Mammary epithelial cell (primary cell): ENCODE measurements at regions of chr7 and their contacts with region 1.

Region 1: GRCh38 chr7:148940702-148941597 is 56.9 kb upstream of the EZH2 start:
- DNase-seq: peak; percentile 77
- H3K4me3 ChIP-seq: peak overlapping the region; percentile 67 to 74 (median 73)
- H3K27ac ChIP-seq: peak overlapping the region; percentile 97
- H3K4me1 ChIP-seq: no peaks in the 10 kb centered on the region
- H3K27me3 ChIP-seq: no peaks in the 10 kb centered on the region
- CTCF ChIP-seq: no peak

Region 2: GRCh38 chr7:148611692-148612091 is 329.3 kb before region 1 on chr7:
- CTCF ChIA-PET with region 1: no interaction called
- dilution Hi-C with region 1: no loop called
- in situ Hi-C with region 1: no loop called
- intact Hi-C with region 1: no loop called
- DNase-seq: no peak
- H3K4me3 ChIP-seq: no peak overlapping the region
- H3K27ac ChIP-seq: no peak overlapping the region
- H3K4me1 ChIP-seq: no peaks in the 10 kb centered on the region
- H3K27me3 ChIP-seq: peaks cover 10% of the 10 kb centered on the region
- CTCF ChIP-seq: peak in 1 of 2 donors; percentile 24

Region 3: GRCh38 chr7:148698397-148699023 is 242.4 kb before region 1 on chr7 and contains the start of gene CUL1:
- CTCF ChIA-PET with region 1: no interaction called
- dilution Hi-C with region 1: no loop called
- in situ Hi-C with region 1: no loop called
- intact Hi-C with region 1: loop called (anchors 5 kb)
- DNase-seq: peak; percentile 79
- H3K4me3 ChIP-seq: peak within 1 kb of the TSS; percentile 49 to 85 (median 79)
- H3K27ac ChIP-seq: peak within 1 kb of the TSS; percentile 89
- H3K4me1 ChIP-seq: peaks cover 48% of the 10 kb centered on the region
- H3K27me3 ChIP-seq: no peaks in the 10 kb centered on the region
- CTCF ChIP-seq: no peak
- total RNA-seq, gene CUL1: 53.5 to 54.9 TPM

Region 4: GRCh38 chr7:148838905-148839304 is 102.0 kb before region 1 on chr7:
- CTCF ChIA-PET with region 1: no interaction called
- dilution Hi-C with region 1: no loop called
- in situ Hi-C with region 1: no loop called
- intact Hi-C with region 1: loop called (anchors 5 kb)
- DNase-seq: no peak
- H3K4me3 ChIP-seq: no peak overlapping the region
- H3K27ac ChIP-seq: no peak overlapping the region
- H3K4me1 ChIP-seq: no peaks in the 10 kb centered on the region
- H3K27me3 ChIP-seq: no peaks in the 10 kb centered on the region
- CTCF ChIP-seq: no peak

Region 5: DNA sequence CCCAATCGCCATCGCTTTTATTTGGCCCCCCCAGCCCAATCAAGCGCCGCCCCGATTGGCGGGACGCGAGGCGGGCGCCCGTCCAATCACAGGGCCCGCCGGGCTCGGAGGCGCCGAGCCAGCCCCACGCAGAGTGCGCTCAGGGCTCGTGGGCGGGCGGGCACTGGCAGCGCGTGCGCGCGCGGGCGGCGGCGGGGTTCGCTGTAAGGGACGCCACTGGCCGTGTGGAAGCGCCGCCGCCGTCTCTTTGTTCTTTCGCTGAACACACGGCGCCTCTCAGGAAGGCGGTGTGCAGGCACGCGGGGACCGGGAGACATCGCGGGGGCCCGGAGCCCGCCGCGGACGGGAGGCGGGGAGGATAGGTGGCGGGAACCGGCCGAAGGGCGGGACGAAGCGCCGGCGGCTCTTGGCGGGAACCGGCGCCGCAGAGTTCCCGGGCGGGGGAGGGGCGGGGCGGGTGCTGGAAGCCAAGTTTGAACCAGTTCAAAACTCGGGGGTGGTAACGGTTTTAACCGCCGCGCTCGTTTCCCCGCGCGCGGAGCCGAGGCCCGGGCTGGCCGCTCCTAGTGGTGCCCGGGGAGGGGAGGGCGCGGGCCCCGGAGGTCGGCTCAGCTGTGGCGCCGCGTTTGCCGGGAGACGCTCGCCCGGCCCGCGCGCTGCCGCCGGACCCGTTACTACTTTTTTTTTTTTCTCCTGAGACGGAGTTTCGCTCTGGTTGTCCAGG is 56.5 kb before region 1 on chr7:
- CTCF ChIA-PET with region 1: no interaction called
- dilution Hi-C with region 1: no loop called
- in situ Hi-C with region 1: loop called in 1 of 2 experiments (anchors 10 kb)
- intact Hi-C with region 1: loop called (anchors 1 kb)
- DNase-seq: peak; percentile 90
- H3K4me3 ChIP-seq: peak overlapping the region; percentile 82 to 87 (median 87)
- H3K27ac ChIP-seq: peak overlapping the region; percentile 83
- H3K4me1 ChIP-seq: peaks cover 8% of the 10 kb centered on the region
- H3K27me3 ChIP-seq: no peaks in the 10 kb centered on the region
- CTCF ChIP-seq: no peak

Region 6: DNA sequence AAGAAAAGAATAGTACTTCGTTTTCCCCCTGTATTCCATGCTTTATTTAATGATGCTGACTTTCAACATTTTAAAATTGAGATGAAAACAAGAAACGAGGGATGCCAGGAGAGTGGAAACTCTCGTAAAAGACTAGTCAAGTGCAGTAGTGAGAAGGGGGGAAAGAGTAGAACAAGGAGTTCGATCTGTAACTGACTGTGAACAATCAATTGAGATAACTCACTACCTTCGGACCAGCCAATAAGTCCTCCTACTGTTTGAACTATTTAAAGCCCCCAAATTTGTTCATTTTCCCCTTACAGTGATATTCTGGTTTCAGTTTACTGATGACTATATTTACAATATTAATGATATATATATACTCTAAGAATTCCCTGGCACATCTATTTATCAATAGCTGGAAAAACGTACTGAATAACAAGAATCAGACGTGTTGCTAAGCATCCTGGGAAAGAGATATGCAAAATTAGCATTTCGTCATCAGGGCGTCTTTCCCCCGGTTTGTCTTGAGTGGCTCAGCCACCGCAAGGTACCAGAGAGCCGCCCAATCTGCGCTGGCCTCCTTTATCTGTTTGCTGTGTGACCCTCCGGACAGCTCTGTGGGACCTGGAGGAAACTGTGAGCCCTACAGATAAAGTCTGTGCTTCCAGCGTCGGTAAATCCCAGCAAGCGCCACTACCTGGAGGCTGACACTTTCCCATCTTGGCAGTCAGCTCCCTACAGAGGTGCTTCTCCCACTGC is 46.2 kb after region 1 on chr7:
- CTCF ChIA-PET with region 1: no interaction called
- dilution Hi-C with region 1: no loop called
- in situ Hi-C with region 1: no loop called
- intact Hi-C with region 1: loop called (anchors 2 kb)
- DNase-seq: peak; percentile 81
- H3K4me3 ChIP-seq: peak overlapping the region; percentile 54 to 59 (median 56)
- H3K27ac ChIP-seq: peak overlapping the region; percentile 84
- H3K4me1 ChIP-seq: peaks cover 29% of the 10 kb centered on the region
- H3K27me3 ChIP-seq: no peaks in the 10 kb centered on the region
- CTCF ChIP-seq: no peak